ENCODE measurements at regions of chr4 and their contacts with region 1.

Region 1: GRCh38 chr4:151015459-151016347 is 619 bp upstream of the LRBA start:
- DNase-seq: peak; percentile 92 to 95
- H3K4me3 ChIP-seq: peak overlapping the region; percentile 97
- H3K4me3 Mint-ChIP-seq: peak overlapping the region; percentile 94
- H3K27ac Mint-ChIP-seq: peak overlapping the region; percentile 93
- H3K4me1 ChIP-seq: peaks cover 4% of the 10 kb centered on the region; the same call in 1 of the 2 replicates
- H3K4me1 Mint-ChIP-seq: no peaks in the 10 kb centered on the region
- H3K27me3 ChIP-seq: no peaks in the 10 kb centered on the region
- H3K27me3 Mint-ChIP-seq: no peaks in the 10 kb centered on the region
- CTCF ChIP-seq: no peak

Region 2: GRCh38 chr4:150805183-150806025 is 210.3 kb before region 1 on chr4:
- CTCF ChIA-PET with region 1: no interaction called
- POLR2A ChIA-PET with region 1: no interaction called
- intact Hi-C with region 1: loop called (anchors 10 kb)
- DNase-seq: peak in 1 of 2 experiments; percentile 24
- H3K4me3 ChIP-seq: no peak overlapping the region
- H3K4me3 Mint-ChIP-seq: peak overlapping the region; percentile 50
- H3K27ac Mint-ChIP-seq: peak overlapping the region; percentile 89
- H3K4me1 ChIP-seq: peaks cover 20% of the 10 kb centered on the region
- H3K4me1 Mint-ChIP-seq: peaks cover 23% of the 10 kb centered on the region
- H3K27me3 ChIP-seq: no peaks in the 10 kb centered on the region
- H3K27me3 Mint-ChIP-seq: no peaks in the 10 kb centered on the region
- CTCF ChIP-seq: no peak

Region 3: GRCh38 chr4:150950657-150951288 is 64.9 kb before region 1 on chr4:
- CTCF ChIA-PET with region 1: no interaction called
- POLR2A ChIA-PET with region 1: interaction called, 13 read pairs
- intact Hi-C with region 1: no loop called
- DNase-seq: no peak
- H3K4me3 ChIP-seq: no peak overlapping the region
- H3K4me3 Mint-ChIP-seq: no peak overlapping the region
- H3K27ac Mint-ChIP-seq: no peak overlapping the region
- H3K4me1 ChIP-seq: peaks cover 8% of the 10 kb centered on the region; the same call in 1 of the 2 replicates
- H3K4me1 Mint-ChIP-seq: peaks cover 6% of the 10 kb centered on the region
- H3K27me3 ChIP-seq: no peaks in the 10 kb centered on the region
- H3K27me3 Mint-ChIP-seq: no peaks in the 10 kb centered on the region
- CTCF ChIP-seq: no peak

Region 4: GRCh38 chr4:151035344-151035743 is 19.6 kb after region 1 on chr4:
- CTCF ChIA-PET with region 1: no interaction called
- POLR2A ChIA-PET with region 1: interaction called, 5 read pairs
- intact Hi-C with region 1: loop called (anchors 1 kb)
- DNase-seq: peak; percentile 50 to 78
- H3K4me3 ChIP-seq: no peak overlapping the region
- H3K4me3 Mint-ChIP-seq: peak overlapping the region; percentile 58
- H3K27ac Mint-ChIP-seq: peak overlapping the region; percentile 51
- H3K4me1 ChIP-seq: 0 out of 2 replicates have a peak, but pooled peaks cover 3% of the 10 kb centered on the region
- H3K4me1 Mint-ChIP-seq: peaks cover 19% of the 10 kb centered on the region
- H3K27me3 ChIP-seq: no peaks in the 10 kb centered on the region
- H3K27me3 Mint-ChIP-seq: no peaks in the 10 kb centered on the region
- CTCF ChIP-seq: no peak

Region 5: GRCh38 chr4:151045907-151046306 is 30.2 kb after region 1 on chr4:
- CTCF ChIA-PET with region 1: no interaction called
- POLR2A ChIA-PET with region 1: no interaction called
- intact Hi-C with region 1: loop called (anchors 2 kb)
- DNase-seq: peak; percentile 38 to 46
- H3K4me3 ChIP-seq: no peak overlapping the region
- H3K4me3 Mint-ChIP-seq: no peak overlapping the region
- H3K27ac Mint-ChIP-seq: no peak overlapping the region
- H3K4me1 ChIP-seq: no peaks in the 10 kb centered on the region
- H3K4me1 Mint-ChIP-seq: peaks cover 7% of the 10 kb centered on the region
- H3K27me3 ChIP-seq: no peaks in the 10 kb centered on the region
- H3K27me3 Mint-ChIP-seq: no peaks in the 10 kb centered on the region
- CTCF ChIP-seq: peak in 1 of 2 experiments; percentile 32

Region 6: GRCh38 chr4:151099229-151099975 is 83.7 kb after region 1 on chr4 and contains the start of gene RPS3A:
- CTCF ChIA-PET with region 1: no interaction called
- POLR2A ChIA-PET with region 1: interaction called, 7 read pairs
- intact Hi-C with region 1: loop called (anchors 1 kb)
- DNase-seq: peak; percentile 95 to 97
- H3K4me3 ChIP-seq: peak within 1 kb of the TSS; percentile 97
- H3K4me3 Mint-ChIP-seq: peak within 1 kb of the TSS; percentile 94
- H3K27ac Mint-ChIP-seq: peak within 1 kb of the TSS; percentile 98
- H3K4me1 ChIP-seq: peaks cover 8% of the 10 kb centered on the region
- H3K4me1 Mint-ChIP-seq: peaks cover 6% of the 10 kb centered on the region
- H3K27me3 ChIP-seq: no peaks in the 10 kb centered on the region
- H3K27me3 Mint-ChIP-seq: no peaks in the 10 kb centered on the region
- CTCF ChIP-seq: peak; percentile 25 to 82
- total RNA-seq, gene RPS3A: 1,868 and 1,919 TPM in 2 replicates

Region 7: GRCh38 chr4:151117371-151117962 is 101.8 kb after region 1 on chr4:
- CTCF ChIA-PET with region 1: no interaction called
- POLR2A ChIA-PET with region 1: no interaction called
- intact Hi-C with region 1: no loop called
- DNase-seq: peak; percentile 58 to 71
- H3K4me3 ChIP-seq: no peak overlapping the region
- H3K4me3 Mint-ChIP-seq: no peak overlapping the region
- H3K27ac Mint-ChIP-seq: no peak overlapping the region
- H3K4me1 ChIP-seq: peaks cover 4% of the 10 kb centered on the region; the same call in 1 of the 2 replicates
- H3K4me1 Mint-ChIP-seq: no peaks in the 10 kb centered on the region
- H3K27me3 ChIP-seq: no peaks in the 10 kb centered on the region
- H3K27me3 Mint-ChIP-seq: no peaks in the 10 kb centered on the region
- CTCF ChIP-seq: peak; percentile 69 to 70

Region 8: GRCh38 chr4:151227731-151228130 is 212.0 kb after region 1 on chr4:
- CTCF ChIA-PET with region 1: no interaction called
- POLR2A ChIA-PET with region 1: no interaction called
- intact Hi-C with region 1: no loop called
- DNase-seq: no peak
- H3K4me3 ChIP-seq: no peak overlapping the region
- H3K4me3 Mint-ChIP-seq: no peak overlapping the region
- H3K27ac Mint-ChIP-seq: no peak overlapping the region
- H3K4me1 ChIP-seq: peaks cover 12% of the 10 kb centered on the region
- H3K4me1 Mint-ChIP-seq: peaks cover 9% of the 10 kb centered on the region
- H3K27me3 ChIP-seq: no peaks in the 10 kb centered on the region
- H3K27me3 Mint-ChIP-seq: no peaks in the 10 kb centered on the region
- CTCF ChIP-seq: no peak